Ascending aorta (tissue), 2 donors: ENCODE measurements at regions of chr1 and their contacts with region 1.

Region 1: GRCh38 chr1:10796019-10796944 is at the start of gene CASZ1:
- DNase-seq: peak in 1 of 2 donors; percentile 83
- H3K4me3 ChIP-seq: peak within 1 kb of the TSS; percentile 65 to 74
- H3K27ac ChIP-seq: peak within 1 kb of the TSS in 1 of 2 donors; percentile 46
- H3K4me1 ChIP-seq: peaks cover 6 to 28% of the 10 kb centered on the region in 2 donors
- H3K27me3 ChIP-seq: no peaks in the 10 kb centered on the region
- CTCF ChIP-seq: no peak
- total RNA-seq, gene CASZ1: 25.8 TPM

Region 2: DNA sequence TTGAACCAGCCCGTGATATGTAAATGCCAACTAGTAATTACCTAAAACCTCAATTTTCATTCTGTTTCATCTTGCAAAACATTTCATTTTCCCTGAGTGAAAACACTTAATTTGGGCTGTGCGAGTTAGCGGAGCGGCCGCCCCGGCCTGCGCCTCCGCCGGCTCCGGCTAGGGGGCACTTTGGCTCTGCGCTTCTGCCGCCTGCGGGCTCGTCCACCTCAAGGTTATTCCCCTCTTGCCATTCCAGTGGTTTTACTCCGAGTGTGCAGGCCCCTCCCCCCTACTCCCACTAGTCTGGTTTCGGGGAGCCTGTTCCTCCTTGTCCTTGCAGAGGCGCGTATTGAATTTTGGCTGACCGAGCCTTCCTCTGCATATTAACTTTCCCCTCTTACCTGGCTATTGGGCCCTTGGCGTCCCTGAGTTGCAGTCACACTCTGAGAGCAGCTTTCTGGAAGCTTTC is 266.0 kb before region 1 on chr1:
- intact Hi-C with region 1: loop called (anchors 5 kb)
- DNase-seq: peak in 1 of 2 donors; percentile 66
- H3K4me3 ChIP-seq: peak overlapping the region in 1 of 2 donors; percentile 33
- H3K27ac ChIP-seq: peak overlapping the region; percentile 31 to 74
- H3K4me1 ChIP-seq: peaks cover 10 to 26% of the 10 kb centered on the region in 2 donors
- H3K27me3 ChIP-seq: no peaks in the 10 kb centered on the region
- CTCF ChIP-seq: peak; percentile 51 to 67 (median 60)

Region 3: GRCh38 chr1:10679496-10680220 is 116.6 kb before region 1 on chr1:
- intact Hi-C with region 1: loop called (anchors 5 kb)
- DNase-seq: no peak
- H3K4me3 ChIP-seq: no peak overlapping the region
- H3K27ac ChIP-seq: no peak overlapping the region
- H3K4me1 ChIP-seq: peaks cover 0 to 50% of the 10 kb centered on the region in 2 donors
- H3K27me3 ChIP-seq: no peaks in the 10 kb centered on the region
- CTCF ChIP-seq: no peak

Region 4: GRCh38 chr1:10724948-10725847 is 71.1 kb before region 1 on chr1:
- intact Hi-C with region 1: loop called (anchors 5 kb)
- DNase-seq: peak in 1 of 2 donors; percentile 73
- H3K4me3 ChIP-seq: no peak overlapping the region
- H3K27ac ChIP-seq: peak overlapping the region; percentile 35 to 76
- H3K4me1 ChIP-seq: peaks cover 0 to 22% of the 10 kb centered on the region in 2 donors
- H3K27me3 ChIP-seq: no peaks in the 10 kb centered on the region
- CTCF ChIP-seq: no peak

Region 5: DNA sequence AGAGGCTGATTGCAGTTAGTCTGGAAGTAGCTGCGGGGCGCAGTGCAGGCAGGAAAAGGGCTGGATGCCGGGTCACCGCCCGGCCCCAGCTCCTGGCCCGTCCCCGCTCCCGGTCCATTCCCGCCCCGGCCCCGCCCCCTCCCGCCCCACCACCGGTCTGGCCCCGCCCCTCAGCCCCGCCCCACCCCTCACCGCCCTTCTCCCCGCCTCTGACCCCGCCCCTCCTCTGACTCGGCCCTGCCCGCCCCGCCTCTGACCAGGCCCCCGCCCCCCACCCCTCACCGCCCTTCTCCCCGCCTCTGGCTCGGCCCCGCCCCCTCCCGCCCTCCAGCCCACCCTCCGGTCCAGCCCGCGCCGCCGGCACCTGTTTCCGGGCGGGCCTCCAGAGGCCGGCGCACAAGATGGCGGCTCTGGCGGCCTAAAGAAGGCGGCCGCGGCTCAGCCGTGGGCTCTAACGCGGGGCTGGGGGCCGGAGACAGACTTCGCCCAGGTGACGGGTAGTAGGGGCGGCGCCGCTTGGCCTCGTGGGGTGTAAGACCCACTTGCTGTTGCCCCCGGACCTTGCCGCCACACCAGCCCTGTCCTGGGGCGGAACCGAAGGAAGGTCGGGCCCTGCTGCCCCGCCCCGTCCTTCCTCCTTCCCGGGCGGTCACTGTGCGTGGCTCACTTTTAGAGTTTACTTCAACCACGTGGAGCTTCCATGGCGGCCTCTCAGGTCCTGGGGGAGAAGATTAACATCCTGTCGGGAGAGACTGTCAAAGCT is 476.7 kb after region 1 on chr1 and contains the start of gene UBIAD1:
- intact Hi-C with region 1: loop called (anchors 5 kb)
- DNase-seq: peak; percentile 39 to 86
- H3K4me3 ChIP-seq: peak within 1 kb of the TSS; percentile 91 to 96
- H3K27ac ChIP-seq: peak within 1 kb of the TSS; percentile 79 to 93
- H3K4me1 ChIP-seq: peaks cover 0 to 29% of the 10 kb centered on the region in 2 donors
- H3K27me3 ChIP-seq: no peaks in the 10 kb centered on the region
- CTCF ChIP-seq: peak in 1 of 3 experiments; percentile 25
- total RNA-seq, gene UBIAD1: 53.0 TPM